B cell (primary cell): ENCODE measurements at regions of chr21 and their contacts with region 1.

Region 1: GRCh38 chr21:29306920-29307319 is 8.2 kb downstream of the BACH1 start:
- DNase-seq: no peak
- ATAC-seq: no peak
- H3K4me3 ChIP-seq: no peak overlapping the region
- H3K4me3 Mint-ChIP-seq: peak overlapping the region; percentile 65
- H3K27ac ChIP-seq: peak overlapping the region; percentile 14 to 44
- H3K27ac Mint-ChIP-seq: peak overlapping the region; percentile 29
- H3K4me1 ChIP-seq: peaks cover 62 to 68% of the 10 kb centered on the region in 2 donors
- H3K4me1 Mint-ChIP-seq: peaks cover 82% of the 10 kb centered on the region
- H3K27me3 ChIP-seq: no peaks in the 10 kb centered on the region
- H3K27me3 Mint-ChIP-seq: no peaks in the 10 kb centered on the region
- CTCF ChIP-seq: no peak

Region 2: DNA sequence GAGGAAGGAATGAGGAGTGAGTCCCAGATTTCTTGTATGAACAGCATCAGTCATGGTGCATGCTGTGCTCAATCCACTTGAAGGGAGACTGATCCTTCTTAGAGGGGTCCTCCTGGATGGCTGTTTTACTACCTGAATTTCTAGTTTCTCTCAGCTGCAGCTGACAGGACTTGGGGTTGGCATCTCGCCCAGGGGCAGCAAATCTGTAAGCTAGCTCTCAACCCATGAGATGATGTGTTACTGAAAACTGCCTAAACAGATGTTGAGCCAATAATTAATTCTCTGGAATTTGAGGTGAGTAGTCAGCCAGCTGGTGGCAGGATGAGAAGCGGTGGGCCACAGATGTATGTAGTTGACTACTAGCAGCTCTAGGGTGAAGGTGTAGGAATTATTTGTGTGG is 11.4 kb after region 1 on chr21:
- CTCF ChIA-PET with region 1: no interaction called
- POLR2A ChIA-PET with region 1: interaction called, 4 read pairs
- intact Hi-C with region 1: loop called (anchors 1 kb)
- DNase-seq: no peak
- ATAC-seq: no peak
- H3K4me3 ChIP-seq: no peak overlapping the region
- H3K4me3 Mint-ChIP-seq: no peak overlapping the region
- H3K27ac ChIP-seq: no peak overlapping the region
- H3K27ac Mint-ChIP-seq: no peak overlapping the region
- H3K4me1 ChIP-seq: peaks cover 6 to 14% of the 10 kb centered on the region in 2 donors
- H3K4me1 Mint-ChIP-seq: peaks cover 66% of the 10 kb centered on the region
- H3K27me3 ChIP-seq: no peaks in the 10 kb centered on the region
- H3K27me3 Mint-ChIP-seq: no peaks in the 10 kb centered on the region
- CTCF ChIP-seq: no peak